ENCODE measurements at regions of chr5 and their contacts with region 1.

Region 1: GRCh38 chr5:97434021-97434420 is 251.0 kb upstream of the RIOK2 start:
- DNase-seq: no peak

Region 2: GRCh38 chr5:97449172-97449571 is 15.2 kb after region 1 on chr5:
- intact Hi-C with region 1: loop called (anchors 1 kb)
- DNase-seq: no peak